CD14-positive monocyte (primary cell): ENCODE measurements at regions of chr20 and their contacts with region 1.

Region 1: DNA sequence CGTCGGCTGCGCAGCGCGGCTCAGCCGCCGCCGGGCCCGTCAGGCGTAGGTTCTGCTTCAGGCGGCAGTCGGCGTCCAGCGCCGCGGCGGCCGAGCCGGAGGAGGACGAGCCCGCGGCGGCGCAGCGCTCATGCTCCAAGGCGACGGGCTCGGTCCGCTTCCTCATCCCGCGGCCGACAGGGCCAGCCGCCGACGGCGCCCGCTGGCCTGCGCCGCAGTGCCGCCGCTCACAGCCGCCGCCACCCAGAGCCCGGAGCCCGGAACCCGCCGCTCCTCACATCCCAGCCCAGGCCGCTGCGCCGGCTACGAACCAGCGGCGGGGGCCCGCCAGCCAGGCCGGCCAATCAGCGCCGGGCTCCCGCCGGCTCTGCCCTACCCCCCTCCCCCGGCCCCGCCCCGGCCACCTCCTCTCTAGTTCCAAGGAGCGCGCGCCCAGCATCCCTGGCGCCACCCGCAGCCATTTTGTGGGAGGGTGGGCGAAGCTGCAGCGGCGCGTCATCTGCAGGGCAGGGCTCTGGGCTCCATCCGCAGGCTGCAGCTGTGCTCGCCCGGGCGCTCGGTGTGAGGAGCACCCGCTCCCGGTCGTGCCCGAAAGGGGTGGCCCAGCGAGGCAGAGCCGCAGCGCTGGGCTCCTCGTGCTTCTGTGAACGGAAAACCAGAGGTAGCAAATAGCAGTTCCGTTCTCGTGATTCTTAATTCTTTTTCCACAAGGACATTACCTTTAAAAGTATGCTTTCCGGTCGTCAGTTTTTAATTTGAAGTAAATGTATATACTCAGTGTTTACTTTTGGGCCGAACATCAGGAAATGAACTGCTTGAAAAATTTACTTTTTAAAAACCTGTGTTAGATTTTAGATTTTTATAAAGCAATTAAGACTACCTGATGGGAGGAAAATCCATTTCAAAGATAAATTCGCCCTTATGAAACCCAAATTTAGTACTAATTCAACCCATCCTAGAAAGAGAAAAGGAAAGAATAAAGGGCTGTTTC is at the start of gene ABHD12:
- DNase-seq: peak; percentile 90 to 94 (median 93)
- H3K4me3 ChIP-seq: peak within 1 kb of the TSS; percentile 72 to 79 (median 79)
- H3K4me3 Mint-ChIP-seq: peak within 1 kb of the TSS; percentile 84 to 91
- H3K27ac ChIP-seq: peak within 1 kb of the TSS; percentile 64 to 86
- H3K27ac Mint-ChIP-seq: peak within 1 kb of the TSS; percentile 78 to 93 (median 89)
- H3K4me1 ChIP-seq: peaks cover 10 to 20% of the 10 kb centered on the region in 2 donors
- H3K4me1 Mint-ChIP-seq: peaks cover 12% of the 10 kb centered on the region
- H3K27me3 ChIP-seq: no peaks in the 10 kb centered on the region
- H3K27me3 Mint-ChIP-seq: peaks cover 0 to 2% (median 0%) of the 10 kb centered on the region in 3 donors
- CTCF ChIP-seq: no peak
- polyA plus RNA-seq, gene ABHD12: 20.3 to 34.5 (median 32.1) TPM

Region 2: DNA sequence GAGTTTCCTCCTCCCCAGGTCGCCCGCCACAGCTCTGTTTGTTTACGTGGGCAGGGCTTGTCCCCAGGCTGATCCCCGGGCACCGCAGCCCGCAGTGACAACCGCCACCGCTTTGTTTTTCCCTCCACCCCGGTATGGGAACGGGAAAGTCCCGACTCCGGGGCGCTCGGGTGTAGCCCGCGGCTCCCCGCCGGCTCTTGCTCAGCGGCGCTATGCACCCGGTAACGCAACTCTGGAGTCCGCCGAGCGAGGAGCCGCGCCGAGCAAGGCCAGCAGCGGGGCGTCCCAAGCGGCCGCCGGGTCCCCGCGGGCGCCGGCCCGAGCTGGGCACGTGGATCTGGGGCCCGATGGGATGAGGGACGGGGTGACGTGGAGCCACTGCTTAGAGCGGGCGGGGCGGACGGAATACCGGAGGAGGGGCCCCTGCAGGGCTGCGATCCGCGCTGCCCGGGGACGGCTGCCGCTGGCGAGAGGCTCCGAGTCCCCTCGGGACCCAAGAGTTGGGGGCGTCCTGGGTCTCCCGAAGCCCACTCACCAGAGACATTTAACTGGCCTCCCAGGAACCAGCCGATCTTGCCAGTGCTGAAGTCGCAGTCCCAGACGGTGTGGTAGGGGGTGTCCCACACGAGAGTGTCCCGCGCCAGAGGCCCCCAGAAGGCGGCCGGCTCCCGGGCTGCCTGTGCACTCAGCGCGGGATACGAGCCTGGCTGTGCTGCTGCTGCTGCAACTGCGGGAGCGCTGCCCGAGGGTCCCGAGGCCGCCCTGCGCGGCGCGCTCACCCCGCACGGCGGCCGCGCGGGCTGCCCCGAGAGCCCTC is 333.4 kb before region 1 on chr20:
- intact Hi-C with region 1: loop called in 1 of 2 experiments (anchors 10 kb)
- DNase-seq: peak; percentile 48 to 74 (median 67)
- H3K4me3 ChIP-seq: peak overlapping the region; percentile 51 to 95 (median 94)
- H3K4me3 Mint-ChIP-seq: peak overlapping the region; percentile 85 to 89
- H3K27ac ChIP-seq: peak overlapping the region; percentile 86 to 93
- H3K27ac Mint-ChIP-seq: peak overlapping the region; percentile 75 to 91 (median 89)
- H3K4me1 ChIP-seq: peaks cover 39 to 47% of the 10 kb centered on the region in 2 donors
- H3K4me1 Mint-ChIP-seq: peaks cover 46% of the 10 kb centered on the region
- H3K27me3 ChIP-seq: no peaks in the 10 kb centered on the region
- H3K27me3 Mint-ChIP-seq: peaks cover 6 to 12% (median 6%) of the 10 kb centered on the region in 3 donors
- CTCF ChIP-seq: no peak

Region 3: GRCh38 chr20:25204550-25205276 is 186.1 kb before region 1 on chr20:
- intact Hi-C with region 1: loop called in 1 of 2 experiments (anchors 10 kb)
- DNase-seq: peak; percentile 37 to 47 (median 42)
- H3K4me3 ChIP-seq: peak overlapping the region in 1 of 3 experiments; percentile 48
- H3K4me3 Mint-ChIP-seq: peak overlapping the region; percentile 59 to 80
- H3K27ac ChIP-seq: peak overlapping the region; percentile 78 to 81
- H3K27ac Mint-ChIP-seq: peak overlapping the region; percentile 75 to 94 (median 92)
- H3K4me1 ChIP-seq: peaks cover 31 to 34% of the 10 kb centered on the region in 2 donors
- H3K4me1 Mint-ChIP-seq: peaks cover 44% of the 10 kb centered on the region
- H3K27me3 ChIP-seq: no peaks in the 10 kb centered on the region
- H3K27me3 Mint-ChIP-seq: peaks cover 0 to 4% (median 3%) of the 10 kb centered on the region in 3 donors
- CTCF ChIP-seq: no peak

Region 4: GRCh38 chr20:25247956-25248785 is 142.7 kb before region 1 on chr20 and contains the start of gene PYGB:
- intact Hi-C with region 1: loop called (anchors 5 kb)
- DNase-seq: peak; percentile 84 to 85 (median 84)
- H3K4me3 ChIP-seq: peak within 1 kb of the TSS; percentile 55 to 86 (median 80)
- H3K4me3 Mint-ChIP-seq: peak within 1 kb of the TSS; percentile 95 to 96
- H3K27ac ChIP-seq: peak within 1 kb of the TSS; percentile 78 to 89
- H3K27ac Mint-ChIP-seq: peak within 1 kb of the TSS; percentile 89 to 96 (median 94)
- H3K4me1 ChIP-seq: peaks cover 20 to 24% of the 10 kb centered on the region in 2 donors
- H3K4me1 Mint-ChIP-seq: peaks cover 43% of the 10 kb centered on the region
- H3K27me3 ChIP-seq: peaks cover 0 to 2% of the 10 kb centered on the region in 2 donors
- H3K27me3 Mint-ChIP-seq: peaks cover 10 to 16% (median 12%) of the 10 kb centered on the region in 3 donors
- CTCF ChIP-seq: no peak
- polyA plus RNA-seq, gene PYGB: 26.6 to 33.2 (median 26.7) TPM

Region 5: DNA sequence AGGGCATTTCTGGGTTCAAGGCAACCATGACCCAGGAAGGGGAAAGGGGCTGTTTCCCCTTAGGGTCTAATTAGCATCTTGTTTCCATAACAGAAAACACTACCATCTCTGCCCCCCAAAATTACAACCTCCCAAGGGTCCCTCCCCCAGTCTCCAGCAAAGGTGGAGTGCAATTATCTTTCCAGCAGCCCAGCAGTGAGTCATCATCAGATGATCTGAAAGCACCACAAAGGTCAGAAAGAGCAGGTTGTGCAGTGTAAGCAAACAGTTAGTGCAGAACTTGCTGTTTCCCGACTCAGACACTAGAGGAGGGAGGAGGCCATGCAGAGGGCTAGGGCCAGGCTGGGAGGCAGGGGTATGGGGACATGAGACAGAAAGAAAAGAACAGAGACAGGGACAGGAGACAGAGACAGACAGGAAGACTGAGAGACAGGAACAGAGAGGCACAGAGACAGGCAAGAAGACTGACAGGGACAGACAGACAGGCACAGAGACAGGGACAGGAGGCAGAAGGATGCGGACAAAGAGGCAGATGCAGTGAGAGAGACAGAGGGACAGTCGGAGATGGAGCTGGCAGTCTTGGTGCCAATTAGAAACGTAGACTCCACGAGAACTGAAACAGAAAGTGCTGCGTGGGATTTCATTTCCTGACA is 80.4 kb before region 1 on chr20:
- intact Hi-C with region 1: loop called (anchors 5 to 10 kb)
- DNase-seq: peak; percentile 84 to 92 (median 85)
- H3K4me3 ChIP-seq: peak overlapping the region; percentile 14 to 64 (median 31)
- H3K4me3 Mint-ChIP-seq: peak overlapping the region; percentile 81 to 96
- H3K27ac ChIP-seq: peak overlapping the region; percentile 82 to 92
- H3K27ac Mint-ChIP-seq: peak overlapping the region; percentile 92 to 100 (median 96)
- H3K4me1 ChIP-seq: peaks cover 25 to 28% of the 10 kb centered on the region in 2 donors
- H3K4me1 Mint-ChIP-seq: peaks cover 29% of the 10 kb centered on the region
- H3K27me3 ChIP-seq: no peaks in the 10 kb centered on the region
- H3K27me3 Mint-ChIP-seq: peaks cover 0 to 2% (median 0%) of the 10 kb centered on the region in 3 donors
- CTCF ChIP-seq: peak; percentile 43

Region 6: GRCh38 chr20:25318471-25319240 is 72.2 kb before region 1 on chr20:
- intact Hi-C with region 1: loop called (anchors 5 kb)
- DNase-seq: peak; percentile 88 to 92 (median 91)
- H3K4me3 ChIP-seq: peak overlapping the region in 1 of 3 experiments; percentile 22
- H3K4me3 Mint-ChIP-seq: peak overlapping the region; percentile 51 to 63
- H3K27ac ChIP-seq: peak overlapping the region; percentile 93
- H3K27ac Mint-ChIP-seq: peak overlapping the region; percentile 87 to 91 (median 89)
- H3K4me1 ChIP-seq: peaks cover 35 to 47% of the 10 kb centered on the region in 2 donors
- H3K4me1 Mint-ChIP-seq: peaks cover 43% of the 10 kb centered on the region
- H3K27me3 ChIP-seq: no peaks in the 10 kb centered on the region
- H3K27me3 Mint-ChIP-seq: no peaks in the 10 kb centered on the region
- CTCF ChIP-seq: no peak

Region 7: DNA sequence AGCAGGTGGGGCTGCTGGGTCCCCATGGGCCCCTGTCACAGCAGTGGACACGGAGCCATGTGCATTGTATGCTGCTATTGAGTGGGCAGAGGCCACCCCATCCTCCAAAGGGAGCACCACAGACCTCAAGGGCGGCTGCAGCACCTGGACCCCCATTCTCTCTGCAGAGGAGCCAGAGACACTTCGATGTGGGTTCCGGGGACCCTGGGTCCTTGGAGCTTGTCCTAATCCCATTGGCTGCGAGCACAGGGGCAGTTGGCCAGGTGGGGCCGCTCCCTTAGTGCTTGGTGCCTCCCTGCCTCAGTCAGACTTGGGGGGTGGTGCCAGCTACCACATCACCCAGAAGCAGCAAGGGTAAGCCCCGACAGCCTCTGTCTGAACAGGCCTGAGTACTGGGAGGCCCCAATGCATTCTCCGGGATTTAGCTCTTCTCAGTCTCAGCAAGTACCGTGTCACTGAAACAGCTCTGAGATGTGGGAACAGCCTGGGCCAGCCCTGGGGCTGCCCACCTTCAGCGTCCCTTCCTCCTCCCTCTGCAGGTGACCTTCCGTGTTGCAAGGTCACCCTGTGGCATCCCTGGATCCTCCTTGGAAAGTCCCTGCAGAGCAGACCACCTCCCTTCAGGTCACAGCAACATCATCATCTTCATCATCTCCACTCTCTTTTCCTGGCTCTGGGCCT is 90.5 kb after region 1 on chr20:
- intact Hi-C with region 1: no loop called
- DNase-seq: no peak
- H3K4me3 ChIP-seq: no peak overlapping the region
- H3K4me3 Mint-ChIP-seq: no peak overlapping the region
- H3K27ac ChIP-seq: no peak overlapping the region
- H3K27ac Mint-ChIP-seq: no peak overlapping the region
- H3K4me1 ChIP-seq: no peaks in the 10 kb centered on the region
- H3K4me1 Mint-ChIP-seq: no peaks in the 10 kb centered on the region
- H3K27me3 ChIP-seq: peaks cover 0 to 8% of the 10 kb centered on the region in 2 donors
- H3K27me3 Mint-ChIP-seq: peaks cover 9 to 21% (median 10%) of the 10 kb centered on the region in 3 donors
- CTCF ChIP-seq: no peak